ENCODE measurements at regions of chr10 and their contacts with region 1.

Region 1: DNA sequence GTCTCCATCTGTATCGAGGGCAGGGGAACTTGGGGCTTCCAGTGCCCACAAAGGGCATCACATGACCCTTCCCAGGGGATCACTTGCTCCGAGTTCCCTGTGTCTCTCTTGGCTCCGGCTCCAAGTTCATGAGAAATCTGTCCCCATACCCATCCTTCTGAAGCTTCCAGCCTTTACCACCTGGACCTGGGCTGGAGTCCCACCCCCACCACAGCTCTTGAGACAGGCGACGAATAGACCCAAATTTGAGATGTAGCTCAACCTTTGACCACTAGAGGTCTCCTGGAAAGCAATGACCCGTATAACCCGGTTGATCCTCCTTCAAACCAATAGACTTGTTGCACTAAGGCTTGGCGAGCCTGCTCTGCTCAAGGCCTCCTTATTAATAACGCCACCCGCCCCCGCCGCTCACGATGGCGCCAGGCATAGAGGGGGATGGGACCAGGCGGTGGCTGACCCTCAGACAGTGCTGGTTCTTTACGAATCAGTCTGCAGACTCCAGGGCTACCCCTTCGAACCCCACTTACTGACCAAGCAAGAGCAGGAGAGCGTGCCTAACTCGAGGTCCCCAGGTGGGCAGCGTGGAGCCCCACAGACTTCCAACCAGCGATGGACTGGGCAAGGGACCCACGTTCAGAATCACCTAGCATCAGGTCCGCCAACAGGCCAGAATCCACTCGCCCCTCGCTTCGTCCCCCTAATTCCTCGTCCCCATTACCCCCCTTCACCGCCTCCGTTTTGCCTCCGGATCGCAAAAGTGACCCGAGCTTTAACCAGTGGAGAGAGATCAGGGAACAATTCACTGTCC is 4.4 kb upstream of the ARID5B start:
- DNase-seq: peak; percentile 71 to 78 (median 74)
- H3K4me3 ChIP-seq: peak overlapping the region; percentile 7 to 40
- H3K4me3 Mint-ChIP-seq: peak overlapping the region; percentile 67 to 97 (median 84)
- H3K27ac ChIP-seq: no peak overlapping the region
- H3K27ac Mint-ChIP-seq: peak overlapping the region; percentile 13 to 94 (median 92)
- H3K4me1 ChIP-seq: peaks cover 31% of the 10 kb centered on the region
- H3K4me1 Mint-ChIP-seq: peaks cover 18 to 41% (median 26%) of the 10 kb centered on the region in 4 donors
- H3K27me3 ChIP-seq: no peaks in the 10 kb centered on the region
- H3K27me3 Mint-ChIP-seq: no peaks in the 10 kb centered on the region

Region 2: DNA sequence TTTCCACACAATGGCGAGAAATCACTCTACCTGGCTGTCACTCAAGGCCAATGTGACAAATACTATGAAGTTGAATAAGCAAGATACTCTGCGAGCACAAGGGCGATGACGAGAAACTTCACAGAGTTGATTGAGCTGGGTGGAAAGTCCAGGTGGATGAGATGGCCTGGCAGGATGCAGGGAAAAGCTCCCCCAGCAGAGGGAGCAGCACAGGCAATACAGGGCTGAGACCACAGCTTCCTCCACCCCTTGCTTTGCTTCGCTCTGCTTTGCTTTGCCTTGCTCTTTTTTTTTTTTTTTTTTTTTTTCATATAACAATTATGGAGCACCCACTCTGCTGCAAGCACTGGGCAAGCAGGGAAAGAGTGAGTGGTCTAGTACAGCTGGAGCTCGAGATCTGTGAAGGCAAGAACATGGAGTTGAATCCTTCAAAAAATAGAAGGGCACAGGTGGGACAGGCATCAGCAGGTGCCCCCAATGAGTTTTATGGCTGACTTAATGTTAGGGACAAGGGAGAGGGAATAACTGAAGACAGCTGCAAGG is 146.1 kb before region 1 on chr10:
- CTCF ChIA-PET with region 1: interaction called, 21 read pairs
- POLR2A ChIA-PET with region 1: interaction called, 17 read pairs
- intact Hi-C with region 1: no loop called
- DNase-seq: peak; percentile 55 to 67 (median 65)
- H3K4me3 ChIP-seq: no peak overlapping the region
- H3K4me3 Mint-ChIP-seq: peak overlapping the region in 3 of 8 donors; percentile 24 to 30 (median 29)
- H3K27ac ChIP-seq: no peak overlapping the region
- H3K27ac Mint-ChIP-seq: peak overlapping the region in 2 of 7 donors; percentile 57 to 64
- H3K4me1 ChIP-seq: peaks cover 20% of the 10 kb centered on the region
- H3K4me1 Mint-ChIP-seq: peaks cover 16 to 29% (median 21%) of the 10 kb centered on the region in 4 donors
- H3K27me3 ChIP-seq: no peaks in the 10 kb centered on the region
- H3K27me3 Mint-ChIP-seq: no peaks in the 10 kb centered on the region

Region 3: DNA sequence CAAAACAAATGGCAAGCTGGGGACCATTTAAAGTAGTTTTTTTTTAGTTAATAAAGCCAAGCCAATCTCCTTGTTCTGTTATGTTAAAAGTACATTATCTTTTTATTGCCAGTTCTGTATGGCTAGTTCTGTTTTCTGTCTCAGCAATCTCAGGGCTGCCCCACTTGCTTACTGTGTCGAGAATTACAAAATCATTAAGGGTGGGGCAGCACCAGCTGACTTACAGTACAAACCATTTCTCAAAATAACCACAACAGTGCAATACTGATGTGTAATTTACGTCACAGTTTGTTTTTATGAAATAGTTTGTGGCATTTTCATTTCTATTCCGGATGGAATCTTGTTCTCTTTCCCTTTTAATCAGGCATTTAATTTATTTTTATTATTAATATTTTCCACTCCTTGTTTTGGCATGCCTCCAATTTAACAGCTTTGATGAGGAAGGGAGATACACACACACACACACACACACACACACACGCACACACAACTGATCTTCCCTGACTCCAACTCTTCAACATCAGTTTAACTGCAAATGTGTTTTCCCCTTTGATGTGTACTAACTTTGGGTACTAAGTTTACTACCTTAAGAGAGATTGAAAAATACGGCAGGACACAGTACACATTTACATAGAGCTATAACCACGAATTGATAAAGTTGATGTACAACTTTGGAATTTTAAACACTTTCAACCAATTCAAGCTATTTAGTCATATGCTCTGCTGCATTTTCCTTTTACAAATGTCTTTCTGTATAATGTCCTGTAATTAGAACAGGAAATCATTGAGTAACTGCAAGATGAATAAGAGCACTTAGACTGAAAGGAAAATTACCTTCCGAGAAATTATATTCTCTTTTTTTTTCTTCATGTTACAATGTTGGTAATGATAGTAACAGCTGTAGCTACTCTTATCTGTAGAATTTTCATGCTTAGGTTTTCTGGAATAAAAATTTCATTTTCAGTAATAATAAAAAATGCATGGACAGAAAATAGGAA is 95.9 kb after region 1 on chr10:
- CTCF ChIA-PET with region 1: interaction called, 24 read pairs
- POLR2A ChIA-PET with region 1: interaction called, 86 read pairs
- intact Hi-C with region 1: no loop called
- DNase-seq: peak; percentile 79 to 88 (median 84)
- H3K4me3 ChIP-seq: peak overlapping the region; percentile 9 to 39
- H3K4me3 Mint-ChIP-seq: peak overlapping the region; percentile 47 to 81 (median 74)
- H3K27ac ChIP-seq: peak overlapping the region; percentile 60
- H3K27ac Mint-ChIP-seq: peak overlapping the region; percentile 87 to 98 (median 94)
- H3K4me1 ChIP-seq: peaks cover 71% of the 10 kb centered on the region
- H3K4me1 Mint-ChIP-seq: peaks cover 52 to 72% (median 56%) of the 10 kb centered on the region in 4 donors
- H3K27me3 ChIP-seq: no peaks in the 10 kb centered on the region
- H3K27me3 Mint-ChIP-seq: peaks cover 0 to 3% of the 10 kb centered on the region in 2 donors

Region 4: GRCh38 chr10:62082729-62083411 is 185.8 kb after region 1 on chr10:
- CTCF ChIA-PET with region 1: interaction called, 7 read pairs
- POLR2A ChIA-PET with region 1: interaction called, 15 read pairs
- intact Hi-C with region 1: loop called (anchors 1 kb)
- DNase-seq: peak; percentile 58 to 74 (median 64)
- H3K4me3 ChIP-seq: peak overlapping the region in 1 of 2 donors; percentile 3
- H3K4me3 Mint-ChIP-seq: peak overlapping the region; percentile 58 to 83 (median 73)
- H3K27ac ChIP-seq: peak overlapping the region; percentile 45
- H3K27ac Mint-ChIP-seq: peak overlapping the region; percentile 24 to 95 (median 89)
- H3K4me1 ChIP-seq: peaks cover 79% of the 10 kb centered on the region
- H3K4me1 Mint-ChIP-seq: peaks cover 44 to 77% (median 62%) of the 10 kb centered on the region in 4 donors
- H3K27me3 ChIP-seq: no peaks in the 10 kb centered on the region
- H3K27me3 Mint-ChIP-seq: no peaks in the 10 kb centered on the region

Region 5: GRCh38 chr10:62244780-62245467 is 347.9 kb after region 1 on chr10:
- CTCF ChIA-PET with region 1: interaction called, 38 read pairs
- POLR2A ChIA-PET with region 1: interaction called, 16 read pairs
- intact Hi-C with region 1: loop called (anchors 1 kb)
- DNase-seq: peak; percentile 52 to 68 (median 65)
- H3K4me3 ChIP-seq: no peak overlapping the region
- H3K4me3 Mint-ChIP-seq: peak overlapping the region in 6 of 8 donors; percentile 22 to 62 (median 42)
- H3K27ac ChIP-seq: no peak overlapping the region
- H3K27ac Mint-ChIP-seq: peak overlapping the region in 4 of 7 donors; percentile 11 to 70 (median 37)
- H3K4me1 ChIP-seq: peaks cover 37% of the 10 kb centered on the region
- H3K4me1 Mint-ChIP-seq: peaks cover 22 to 35% (median 25%) of the 10 kb centered on the region in 4 donors
- H3K27me3 ChIP-seq: no peaks in the 10 kb centered on the region
- H3K27me3 Mint-ChIP-seq: peaks cover 0 to 1% of the 10 kb centered on the region in 2 donors